ENCODE measurements at regions of chr1 and their contacts with region 1.

Region 1: GRCh38 chr1:40662864-40663263 is 2.6 kb downstream of the RIMS3 start:
- DNase-seq: peak; percentile 70
- ATAC-seq: peak; percentile 67
- H3K4me3 Mint-ChIP-seq: no peak overlapping the region
- H3K27ac Mint-ChIP-seq: no peak overlapping the region
- H3K4me1 Mint-ChIP-seq: peaks cover 26% of the 10 kb centered on the region
- H3K27me3 Mint-ChIP-seq: no peaks in the 10 kb centered on the region

Region 2: DNA sequence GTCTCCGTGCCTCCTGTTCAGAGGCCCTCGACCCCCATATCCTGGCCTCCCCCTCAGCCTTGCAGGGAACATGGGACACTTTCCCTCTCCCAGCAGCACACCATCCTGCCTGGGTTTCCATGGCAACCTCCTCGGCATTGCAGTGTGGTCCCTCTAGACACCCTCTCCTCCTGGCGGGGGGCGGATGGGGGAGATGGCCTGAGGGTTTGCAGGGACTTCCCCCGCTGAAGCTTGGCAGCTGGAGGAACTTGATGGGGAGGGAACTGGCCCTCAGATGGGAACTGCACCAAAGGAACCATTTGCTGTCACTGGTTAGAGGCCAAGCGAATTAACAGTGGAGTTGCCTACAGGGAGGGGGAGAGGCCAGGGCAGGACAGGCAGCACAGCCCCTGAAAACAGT is 26.1 kb before region 1 on chr1:
- CTCF ChIA-PET with region 1: interaction called, 4 read pairs
- POLR2A ChIA-PET with region 1: no interaction called
- intact Hi-C with region 1: loop called in 1 of 2 experiments (anchors 2 kb)
- DNase-seq: no peak
- ATAC-seq: no peak
- H3K4me3 Mint-ChIP-seq: no peak overlapping the region
- H3K27ac Mint-ChIP-seq: no peak overlapping the region
- H3K4me1 Mint-ChIP-seq: peaks cover 7% of the 10 kb centered on the region
- H3K27me3 Mint-ChIP-seq: no peaks in the 10 kb centered on the region

Region 3: GRCh38 chr1:41286486-41286885 is 623.6 kb after region 1 on chr1:
- CTCF ChIA-PET with region 1: no interaction called
- POLR2A ChIA-PET with region 1: no interaction called
- intact Hi-C with region 1: no loop called
- DNase-seq: no peak
- ATAC-seq: no peak
- H3K4me3 Mint-ChIP-seq: no peak overlapping the region
- H3K27ac Mint-ChIP-seq: no peak overlapping the region
- H3K4me1 Mint-ChIP-seq: peaks cover 2% of the 10 kb centered on the region
- H3K27me3 Mint-ChIP-seq: peaks cover 43% of the 10 kb centered on the region